Gastrocnemius medialis (tissue), 4 donors: ENCODE measurements at regions of chr17 and their contacts with region 1.

Region 1: GRCh38 chr17:76240461-76241203 is at the start of gene RNF157:
- DNase-seq: peak; percentile 60 to 74
- ATAC-seq: peak; percentile 76 to 78
- H3K4me3 ChIP-seq: peak within 1 kb of the TSS; percentile 61 to 85 (median 75)
- H3K27ac ChIP-seq: peak within 1 kb of the TSS; percentile 93 to 95 (median 94)
- H3K4me1 ChIP-seq: peaks cover 21 to 29% of the 10 kb centered on the region in 2 donors
- H3K27me3 ChIP-seq: no peaks in the 10 kb centered on the region
- CTCF ChIP-seq: no peak
- POLR2A ChIP-seq: peak; percentile 78 to 88
- total RNA-seq, gene RNF157: 50.5 to 142 (median 85.3) TPM

Region 2: GRCh38 chr17:75855310-75856081 is 385.1 kb before region 1 on chr17 and contains the start of gene WBP2:
- in situ Hi-C with region 1: no loop called
- intact Hi-C with region 1: loop called (anchors 10 kb)
- DNase-seq: peak; percentile 100
- ATAC-seq: peak; percentile 79 to 80
- H3K4me3 ChIP-seq: peak within 1 kb of the TSS; percentile 63 to 85 (median 78)
- H3K27ac ChIP-seq: peak within 1 kb of the TSS; percentile 95 to 99 (median 96)
- H3K4me1 ChIP-seq: peaks cover 39 to 40% of the 10 kb centered on the region in 2 donors
- H3K27me3 ChIP-seq: no peaks in the 10 kb centered on the region
- CTCF ChIP-seq: peak; percentile 54 to 79 (median 61)
- POLR2A ChIP-seq: peak; percentile 96 to 100
- total RNA-seq, gene WBP2: 129 to 259 (median 148) TPM

Region 3: DNA sequence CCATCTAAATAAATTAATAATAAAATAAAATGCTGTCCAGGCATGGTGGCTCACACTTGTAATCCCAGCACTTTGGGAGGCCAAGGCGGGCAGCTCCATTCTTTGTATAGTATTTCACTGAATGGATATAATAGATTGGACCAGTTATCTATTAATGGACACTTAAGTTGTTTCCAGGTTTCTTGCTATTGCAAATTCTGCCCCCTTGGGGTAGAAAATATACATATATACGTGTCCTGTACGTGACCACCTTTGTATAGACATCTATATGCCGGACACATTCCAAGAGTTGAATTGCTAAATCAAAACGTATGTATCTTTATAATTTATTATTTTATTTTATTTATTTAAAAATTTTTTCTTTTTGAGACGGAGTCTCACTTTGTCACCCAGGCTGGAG is 133.1 kb before region 1 on chr17:
- in situ Hi-C with region 1: no loop called
- intact Hi-C with region 1: no loop called
- DNase-seq: no peak
- ATAC-seq: no peak
- H3K4me3 ChIP-seq: no peak overlapping the region
- H3K27ac ChIP-seq: no peak overlapping the region
- H3K4me1 ChIP-seq: peaks cover 10 to 14% of the 10 kb centered on the region in 2 donors
- H3K27me3 ChIP-seq: no peaks in the 10 kb centered on the region
- CTCF ChIP-seq: no peak
- POLR2A ChIP-seq: no peak

Region 4: DNA sequence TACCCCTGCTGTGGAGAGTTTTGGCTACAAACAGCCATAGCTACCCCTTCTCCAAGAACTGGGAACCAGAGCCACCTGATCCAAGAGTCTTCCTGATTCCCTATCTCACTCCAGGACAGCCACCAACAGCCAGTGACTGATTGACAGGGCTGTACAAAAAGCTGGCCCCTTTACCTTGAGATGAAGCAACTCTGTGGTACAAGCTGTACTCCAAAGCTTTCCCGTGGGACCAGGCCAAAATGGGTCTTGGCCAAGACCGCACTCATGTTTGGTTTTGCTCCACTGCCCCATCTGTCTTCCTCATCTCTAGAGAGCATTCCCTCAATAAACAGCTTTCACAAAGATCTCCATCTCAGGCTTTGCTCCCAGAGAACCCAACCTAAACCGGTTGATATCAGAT is 44.0 kb before region 1 on chr17:
- in situ Hi-C with region 1: no loop called
- intact Hi-C with region 1: loop called (anchors 2 kb)
- DNase-seq: peak; percentile 93 to 97
- ATAC-seq: peak; percentile 98 to 100
- H3K4me3 ChIP-seq: peak overlapping the region in 1 of 4 donors; percentile 3
- H3K27ac ChIP-seq: peak overlapping the region; percentile 87 to 94 (median 90)
- H3K4me1 ChIP-seq: peaks cover 28 to 43% of the 10 kb centered on the region in 2 donors
- H3K27me3 ChIP-seq: no peaks in the 10 kb centered on the region
- CTCF ChIP-seq: peak in 3 of 5 experiments; percentile 21 to 35 (median 24)
- POLR2A ChIP-seq: peak in 1 of 2 donors; percentile 19

Region 5: DNA sequence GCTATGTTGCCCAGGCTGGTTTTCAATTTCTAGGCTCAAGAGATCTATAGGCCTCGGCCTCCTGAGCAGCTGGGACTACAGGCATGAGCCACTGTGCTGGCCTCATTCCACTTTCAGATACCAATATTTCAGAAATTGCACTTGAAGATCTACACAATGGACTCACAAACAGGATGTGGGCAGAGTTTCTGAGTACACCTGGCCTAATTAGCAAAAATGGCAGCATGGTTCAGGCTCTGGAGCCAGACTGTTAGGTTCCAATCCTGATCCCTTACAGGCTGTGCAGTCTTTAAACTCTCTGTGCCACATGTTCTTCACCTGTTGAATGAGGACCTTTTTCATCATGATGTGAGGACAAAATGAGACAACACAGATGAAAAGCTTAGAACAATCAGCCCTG is 32.5 kb before region 1 on chr17:
- in situ Hi-C with region 1: no loop called
- intact Hi-C with region 1: loop called (anchors 2 kb)
- DNase-seq: no peak
- ATAC-seq: no peak
- H3K4me3 ChIP-seq: no peak overlapping the region
- H3K27ac ChIP-seq: peak overlapping the region; percentile 81 to 94 (median 86)
- H3K4me1 ChIP-seq: peaks cover 32 to 34% of the 10 kb centered on the region in 2 donors
- H3K27me3 ChIP-seq: no peaks in the 10 kb centered on the region
- CTCF ChIP-seq: no peak
- POLR2A ChIP-seq: no peak

Region 6: DNA sequence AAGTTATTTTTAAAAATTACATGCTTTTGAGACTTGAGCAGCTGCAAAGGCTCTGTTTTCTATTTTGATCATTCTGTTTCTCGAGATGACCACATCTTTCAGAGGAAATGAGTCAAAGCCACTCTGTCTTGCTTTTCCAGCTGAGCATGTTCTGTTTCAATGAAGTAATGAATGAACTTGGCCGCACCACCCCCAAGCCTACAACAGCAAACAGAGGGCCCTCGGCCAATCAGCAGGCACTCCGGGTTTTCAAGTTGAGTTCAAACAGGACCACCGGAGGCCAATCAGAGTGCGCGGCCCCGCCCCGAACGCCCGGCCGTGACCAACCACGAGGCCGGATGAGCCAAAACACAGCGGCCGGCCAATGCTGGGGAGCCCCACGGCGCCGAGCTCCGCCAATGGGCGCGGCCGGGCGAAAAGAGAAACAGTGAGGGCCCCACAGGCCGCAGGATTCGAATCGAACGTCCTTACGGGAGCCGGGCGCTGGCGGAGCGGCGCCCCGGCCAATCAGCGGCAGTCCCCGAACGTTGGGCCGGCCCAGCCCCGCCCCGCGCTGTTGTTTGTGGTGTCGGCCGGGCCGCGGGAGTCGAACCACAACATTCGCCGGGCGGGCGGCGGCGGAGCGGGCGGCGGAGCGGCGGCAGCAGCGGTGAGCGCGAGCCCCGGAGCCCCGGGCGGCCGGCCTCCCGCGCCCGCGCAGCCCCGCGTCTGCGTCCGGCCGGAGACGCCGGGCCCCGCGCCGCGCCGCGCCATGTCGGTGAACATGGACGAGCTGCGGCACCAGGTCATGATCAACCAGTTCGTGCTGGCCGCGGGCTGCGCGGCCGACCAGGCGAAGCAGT is 24.3 kb after region 1 on chr17 and contains the start of gene UBALD2:
- in situ Hi-C with region 1: no loop called
- intact Hi-C with region 1: loop called (anchors 2 kb)
- DNase-seq: peak; percentile 99 to 100
- ATAC-seq: peak; percentile 78 to 79
- H3K4me3 ChIP-seq: peak within 1 kb of the TSS; percentile 66 to 89 (median 80)
- H3K27ac ChIP-seq: peak within 1 kb of the TSS; percentile 90 to 98 (median 95)
- H3K4me1 ChIP-seq: peaks cover 52 to 58% of the 10 kb centered on the region in 2 donors
- H3K27me3 ChIP-seq: no peaks in the 10 kb centered on the region
- CTCF ChIP-seq: peak in 1 of 5 experiments; percentile 27
- POLR2A ChIP-seq: peak; percentile 96 to 98
- total RNA-seq, gene UBALD2: 28.9 to 151 (median 52.2) TPM